CD14-positive monocyte (primary cell): ENCODE measurements at regions of chr6 and their contacts with region 1.

Region 1: DNA sequence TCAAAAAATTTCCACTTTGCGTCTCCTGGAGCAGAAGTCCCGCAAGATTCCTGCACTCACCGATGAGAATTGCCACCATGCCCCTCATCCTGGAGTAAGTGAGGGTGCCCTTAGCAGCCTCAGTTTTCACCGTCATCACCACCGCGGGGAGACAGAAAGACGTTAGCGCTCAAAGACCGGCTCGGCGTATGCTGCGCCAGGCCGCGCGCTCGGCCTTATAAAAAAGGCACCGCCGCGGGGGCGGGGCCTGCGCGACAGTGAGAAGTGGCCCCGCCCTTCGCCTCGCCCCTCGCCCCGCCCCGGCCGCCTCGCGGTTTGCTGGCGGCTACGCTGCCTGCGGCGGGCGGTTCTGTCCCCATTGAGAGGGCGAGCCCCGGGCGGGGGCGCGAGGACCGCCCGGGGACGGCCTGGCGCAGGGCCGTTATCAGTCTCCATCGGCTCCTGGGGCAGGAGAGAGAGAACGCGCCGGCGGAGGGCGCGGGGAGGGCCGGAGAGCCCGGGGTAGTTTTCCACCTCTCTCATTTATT is 122.3 kb upstream of the SLC2A12 start:
- DNase-seq: peak; percentile 89 to 92 (median 91)
- H3K4me3 ChIP-seq: peak overlapping the region; percentile 83 to 97 (median 95)
- H3K4me3 Mint-ChIP-seq: peak overlapping the region; percentile 100
- H3K27ac ChIP-seq: peak overlapping the region; percentile 97 to 99
- H3K27ac Mint-ChIP-seq: peak overlapping the region; percentile 97 to 100 (median 99)
- H3K4me1 ChIP-seq: peaks cover 58 to 71% of the 10 kb centered on the region in 2 donors
- H3K4me1 Mint-ChIP-seq: peaks cover 60% of the 10 kb centered on the region
- H3K27me3 ChIP-seq: no peaks in the 10 kb centered on the region
- H3K27me3 Mint-ChIP-seq: peaks cover 2 to 4% (median 2%) of the 10 kb centered on the region in 3 donors
- CTCF ChIP-seq: no peak

Region 2: GRCh38 chr6:133380047-133380446 is 794.7 kb before region 1 on chr6:
- intact Hi-C with region 1: no loop called
- DNase-seq: no peak
- H3K4me3 ChIP-seq: no peak overlapping the region
- H3K4me3 Mint-ChIP-seq: no peak overlapping the region
- H3K27ac ChIP-seq: no peak overlapping the region
- H3K27ac Mint-ChIP-seq: no peak overlapping the region
- H3K4me1 ChIP-seq: no peaks in the 10 kb centered on the region
- H3K4me1 Mint-ChIP-seq: peaks cover 2% of the 10 kb centered on the region
- H3K27me3 ChIP-seq: no peaks in the 10 kb centered on the region
- H3K27me3 Mint-ChIP-seq: peaks cover 0 to 3% (median 3%) of the 10 kb centered on the region in 3 donors
- CTCF ChIP-seq: no peak

Region 3: DNA sequence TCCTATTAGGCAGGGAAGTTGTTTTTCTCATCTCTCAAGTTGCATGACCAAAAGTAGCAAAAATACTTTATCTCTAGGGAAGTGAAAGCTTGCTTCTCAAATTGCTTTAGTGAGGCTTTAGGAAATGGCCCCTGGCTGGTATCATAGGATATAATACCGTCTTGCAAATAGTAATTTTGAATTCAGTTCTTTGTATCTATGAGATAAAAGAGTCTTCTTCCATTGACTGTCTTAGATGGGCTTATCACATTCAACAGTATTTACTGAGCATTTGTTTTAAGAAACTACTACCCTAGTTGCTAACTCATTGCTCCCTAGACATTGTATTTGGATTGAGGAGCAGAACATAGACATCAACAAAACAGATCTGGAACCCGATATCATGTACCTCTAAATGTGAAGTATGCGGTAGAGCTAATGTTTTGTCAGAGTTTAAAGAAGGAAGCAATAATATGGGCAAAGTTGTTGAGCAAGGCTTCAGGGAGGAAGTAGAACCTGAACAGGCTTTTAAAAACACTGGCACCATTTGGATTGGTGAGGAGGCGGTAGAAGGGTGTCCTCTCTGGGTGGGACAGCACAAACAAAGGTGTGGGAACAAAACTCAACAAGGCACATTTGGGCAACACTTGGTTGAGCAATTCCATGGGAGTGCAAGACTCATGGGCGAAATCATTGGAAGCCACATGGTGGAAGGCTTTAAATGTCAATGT is 41.7 kb after region 1 on chr6:
- intact Hi-C with region 1: loop called in 1 of 2 experiments (anchors 5 kb)
- DNase-seq: peak; percentile 65 to 82 (median 78)
- H3K4me3 ChIP-seq: peak overlapping the region in 1 of 3 experiments; percentile 29
- H3K4me3 Mint-ChIP-seq: peak overlapping the region; percentile 4 to 78
- H3K27ac ChIP-seq: peak overlapping the region; percentile 73 to 91
- H3K27ac Mint-ChIP-seq: peak overlapping the region; percentile 93 to 98 (median 96)
- H3K4me1 ChIP-seq: peaks cover 31 to 33% of the 10 kb centered on the region in 2 donors
- H3K4me1 Mint-ChIP-seq: peaks cover 24% of the 10 kb centered on the region
- H3K27me3 ChIP-seq: no peaks in the 10 kb centered on the region
- H3K27me3 Mint-ChIP-seq: peaks cover 0 to 2% (median 0%) of the 10 kb centered on the region in 3 donors
- CTCF ChIP-seq: no peak

Region 4: DNA sequence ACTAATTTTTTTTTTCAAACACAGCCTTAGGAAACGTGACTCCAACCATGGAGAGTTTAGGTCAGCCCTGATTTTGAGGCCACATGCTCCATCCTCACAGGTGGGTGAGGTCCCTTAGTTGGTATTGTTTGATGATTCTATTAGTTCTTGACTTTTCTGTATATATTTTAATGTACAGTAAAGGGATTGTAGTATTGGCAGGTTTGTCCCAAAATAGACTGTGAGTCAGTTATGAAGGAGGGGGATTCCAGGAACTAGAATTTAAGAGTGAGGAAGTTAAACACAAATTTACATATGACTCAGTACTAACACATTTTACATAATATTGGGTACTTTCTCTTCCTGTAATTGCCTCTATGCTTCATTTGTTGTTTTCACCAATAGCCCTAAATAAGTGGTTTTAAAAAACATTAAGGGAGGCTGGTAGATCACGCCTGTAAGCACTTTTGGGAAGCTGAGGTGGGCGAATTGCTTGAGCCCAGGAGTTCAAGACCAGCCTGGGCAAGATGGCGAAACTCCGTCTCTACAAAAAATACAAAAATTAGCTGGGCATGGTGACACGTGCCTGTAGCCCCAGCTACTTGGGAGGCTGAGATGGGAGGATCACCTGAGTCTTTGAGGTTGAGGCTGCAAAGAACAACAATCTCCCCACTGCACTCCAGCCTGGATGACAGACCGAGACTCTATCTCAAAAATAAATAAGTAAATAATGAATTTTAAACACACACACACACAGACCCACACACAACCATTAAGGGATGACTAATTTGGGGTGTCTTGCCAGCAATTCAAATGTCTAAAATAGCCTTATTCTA is 61.4 kb after region 1 on chr6:
- intact Hi-C with region 1: loop called (anchors 2 to 5 kb)
- DNase-seq: peak; percentile 81 to 94 (median 93)
- H3K4me3 ChIP-seq: no peak overlapping the region
- H3K4me3 Mint-ChIP-seq: no peak overlapping the region
- H3K27ac ChIP-seq: peak overlapping the region; percentile 90 to 96
- H3K27ac Mint-ChIP-seq: peak overlapping the region; percentile 96 to 99 (median 98)
- H3K4me1 ChIP-seq: peaks cover 56 to 83% of the 10 kb centered on the region in 2 donors
- H3K4me1 Mint-ChIP-seq: peaks cover 58% of the 10 kb centered on the region
- H3K27me3 ChIP-seq: no peaks in the 10 kb centered on the region
- H3K27me3 Mint-ChIP-seq: peaks cover 0 to 1% (median 0%) of the 10 kb centered on the region in 3 donors
- CTCF ChIP-seq: no peak

Region 5: DNA sequence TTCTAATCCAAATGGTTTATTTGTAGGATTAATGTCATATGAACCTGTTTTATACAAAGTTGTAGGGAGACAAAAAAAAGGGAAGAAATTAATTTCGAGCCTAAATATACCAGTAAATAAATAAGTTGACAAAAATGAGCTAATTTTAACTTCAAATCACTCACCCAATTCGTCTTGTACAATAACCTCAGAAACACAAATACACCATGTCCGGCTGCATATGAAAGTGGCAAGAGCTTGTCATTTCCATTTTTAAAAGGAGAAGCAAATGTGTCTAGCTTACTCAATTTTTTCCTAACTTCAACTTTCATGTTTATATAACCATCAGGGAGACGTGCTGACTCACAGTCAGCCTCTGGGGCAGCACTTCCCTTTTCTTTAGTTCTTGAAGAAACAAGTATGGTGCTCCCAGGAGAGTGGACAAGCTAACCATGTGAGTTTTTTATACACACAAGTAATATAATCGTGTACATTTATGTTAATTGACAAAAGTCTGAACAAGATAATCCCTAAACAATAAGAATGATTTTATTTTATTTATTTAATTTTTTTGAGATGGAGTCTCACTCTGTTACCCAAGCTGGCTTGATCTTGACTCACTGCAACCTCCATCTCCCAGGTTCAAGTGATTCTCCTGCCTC is 198.7 kb after region 1 on chr6:
- intact Hi-C with region 1: loop called in 1 of 2 experiments (anchors 5 kb)
- DNase-seq: peak; percentile 95 to 99 (median 97)
- H3K4me3 ChIP-seq: peak overlapping the region; percentile 2 to 70 (median 53)
- H3K4me3 Mint-ChIP-seq: peak overlapping the region; percentile 64 to 86
- H3K27ac ChIP-seq: peak overlapping the region; percentile 97 to 98
- H3K27ac Mint-ChIP-seq: peak overlapping the region; percentile 97 to 99 (median 98)
- H3K4me1 ChIP-seq: peaks cover 54 to 55% of the 10 kb centered on the region in 2 donors
- H3K4me1 Mint-ChIP-seq: peaks cover 62% of the 10 kb centered on the region
- H3K27me3 ChIP-seq: no peaks in the 10 kb centered on the region
- H3K27me3 Mint-ChIP-seq: peaks cover 0 to 8% (median 2%) of the 10 kb centered on the region in 3 donors
- CTCF ChIP-seq: no peak

Region 6: DNA sequence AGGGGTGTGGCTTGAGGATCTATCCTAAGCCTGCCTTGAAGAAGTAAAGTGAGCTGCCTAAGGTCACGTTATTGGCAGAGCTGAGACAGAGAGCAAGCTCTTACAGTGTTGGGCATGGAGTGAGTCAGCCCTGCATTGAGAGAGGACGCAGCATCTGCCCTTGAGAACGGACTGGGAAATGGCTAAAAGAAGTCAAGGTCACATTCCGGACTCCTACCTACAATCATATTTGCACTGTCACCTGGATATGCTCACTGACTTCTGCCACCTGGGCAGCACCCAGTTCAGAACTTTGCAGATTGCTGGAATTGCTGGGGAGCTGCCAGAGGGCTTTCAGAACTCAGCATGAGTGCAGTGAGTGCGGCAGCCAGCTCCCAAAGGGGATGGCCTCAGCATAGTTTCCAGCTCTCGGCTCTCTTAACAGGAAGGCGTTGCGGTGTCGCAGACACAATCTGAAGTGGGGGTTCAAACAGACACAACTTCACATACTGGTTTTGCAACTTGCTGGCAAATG is 342.5 kb after region 1 on chr6:
- intact Hi-C with region 1: loop called (anchors 10 kb)
- DNase-seq: peak; percentile 34 to 57 (median 50)
- H3K4me3 ChIP-seq: no peak overlapping the region
- H3K4me3 Mint-ChIP-seq: peak overlapping the region in 1 of 2 donors; percentile 7
- H3K27ac ChIP-seq: peak overlapping the region in 1 of 2 donors; percentile 64
- H3K27ac Mint-ChIP-seq: peak overlapping the region; percentile 73 to 92 (median 88)
- H3K4me1 ChIP-seq: peaks cover 33 to 40% of the 10 kb centered on the region in 2 donors
- H3K4me1 Mint-ChIP-seq: peaks cover 50% of the 10 kb centered on the region
- H3K27me3 ChIP-seq: no peaks in the 10 kb centered on the region
- H3K27me3 Mint-ChIP-seq: no peaks in the 10 kb centered on the region
- CTCF ChIP-seq: no peak

Region 7: DNA sequence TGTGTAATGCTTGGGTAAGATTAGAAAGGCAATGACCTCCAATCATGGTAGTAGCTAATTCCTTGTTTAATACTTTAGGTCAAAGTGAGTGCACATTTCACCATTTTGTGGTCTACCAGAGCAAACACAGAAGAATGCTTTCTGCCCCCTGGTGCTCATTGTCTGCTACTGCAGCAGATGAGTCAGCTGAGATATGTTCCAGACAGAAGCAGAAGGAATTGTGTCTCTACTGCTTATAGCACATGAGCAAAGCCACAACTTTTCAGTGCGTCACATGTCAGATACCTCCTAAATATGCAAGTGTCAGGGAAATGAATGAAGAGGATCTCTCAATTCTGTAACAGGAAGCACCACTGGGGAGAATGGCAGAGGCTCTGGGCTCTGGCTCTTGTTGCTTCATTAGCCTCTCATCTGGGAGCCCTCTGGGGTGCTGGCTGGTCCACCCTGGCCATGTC is 466.3 kb after region 1 on chr6:
- intact Hi-C with region 1: loop called in 1 of 2 experiments (anchors 5 kb)
- DNase-seq: peak; percentile 97 to 99 (median 97)
- H3K4me3 ChIP-seq: no peak overlapping the region
- H3K4me3 Mint-ChIP-seq: no peak overlapping the region
- H3K27ac ChIP-seq: peak overlapping the region; percentile 58 to 76
- H3K27ac Mint-ChIP-seq: peak overlapping the region; percentile 84 to 98 (median 92)
- H3K4me1 ChIP-seq: peaks cover 12 to 14% of the 10 kb centered on the region in 2 donors
- H3K4me1 Mint-ChIP-seq: peaks cover 15% of the 10 kb centered on the region
- H3K27me3 ChIP-seq: no peaks in the 10 kb centered on the region
- H3K27me3 Mint-ChIP-seq: peaks cover 0 to 2% (median 2%) of the 10 kb centered on the region in 3 donors
- CTCF ChIP-seq: peak; percentile 93

Region 8: DNA sequence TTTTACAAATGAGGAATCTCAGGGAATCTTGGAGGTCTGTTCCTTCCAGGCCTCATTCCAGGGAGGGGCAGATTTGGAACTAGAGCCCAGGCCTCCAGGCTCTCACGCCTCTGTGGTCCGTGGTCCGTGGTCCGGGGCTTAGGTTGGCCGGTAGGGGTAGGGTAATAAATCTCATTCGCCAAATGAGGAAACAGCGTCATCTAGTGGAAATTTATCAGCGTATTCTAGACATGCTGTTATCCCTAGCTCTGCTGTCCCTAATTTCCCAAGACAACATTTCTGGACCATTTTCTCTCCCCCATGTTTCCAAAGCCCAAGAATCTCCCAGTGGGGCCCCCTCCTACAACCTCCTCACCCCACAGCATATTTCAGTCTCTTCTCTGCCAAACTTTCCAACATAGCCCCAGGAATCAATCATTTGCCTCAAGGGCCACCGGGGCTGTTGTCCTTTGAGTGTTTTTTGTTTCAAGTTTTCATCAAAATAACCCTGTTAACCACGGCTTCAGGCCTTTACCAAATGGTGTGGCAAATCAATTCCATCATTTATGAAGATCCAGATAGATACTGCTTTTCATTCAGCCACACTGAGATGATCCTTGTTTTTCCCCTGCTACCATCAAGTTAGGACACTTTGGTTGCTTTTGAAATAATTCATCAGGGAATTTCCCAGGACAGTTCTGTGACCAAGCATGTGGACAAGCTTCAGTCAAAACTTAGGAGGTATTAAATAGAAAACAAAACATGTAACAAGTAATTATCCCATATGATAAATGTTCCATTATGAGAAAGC is 648.4 kb after region 1 on chr6:
- intact Hi-C with region 1: loop called in 1 of 2 experiments (anchors 5 kb)
- DNase-seq: peak; percentile 71 to 88 (median 78)
- H3K4me3 ChIP-seq: no peak overlapping the region
- H3K4me3 Mint-ChIP-seq: no peak overlapping the region
- H3K27ac ChIP-seq: no peak overlapping the region
- H3K27ac Mint-ChIP-seq: peak overlapping the region in 2 of 7 donors; percentile 0 to 23
- H3K4me1 ChIP-seq: no peaks in the 10 kb centered on the region
- H3K4me1 Mint-ChIP-seq: peaks cover 6% of the 10 kb centered on the region
- H3K27me3 ChIP-seq: no peaks in the 10 kb centered on the region
- H3K27me3 Mint-ChIP-seq: peaks cover 0 to 2% (median 0%) of the 10 kb centered on the region in 3 donors
- CTCF ChIP-seq: peak; percentile 90

Region 9: GRCh38 chr6:135030056-135030473 is 855.3 kb after region 1 on chr6:
- intact Hi-C with region 1: no loop called
- DNase-seq: no peak
- H3K4me3 ChIP-seq: no peak overlapping the region
- H3K4me3 Mint-ChIP-seq: no peak overlapping the region
- H3K27ac ChIP-seq: no peak overlapping the region
- H3K27ac Mint-ChIP-seq: peak overlapping the region in 5 of 7 donors; percentile 1 to 63 (median 59)
- H3K4me1 ChIP-seq: no peaks in the 10 kb centered on the region
- H3K4me1 Mint-ChIP-seq: no peaks in the 10 kb centered on the region
- H3K27me3 ChIP-seq: no peaks in the 10 kb centered on the region
- H3K27me3 Mint-ChIP-seq: peaks cover 0 to 1% (median 0%) of the 10 kb centered on the region in 3 donors
- CTCF ChIP-seq: no peak